ENCODE measurements at regions of chr2 and their contacts with region 1.

Region 1: DNA sequence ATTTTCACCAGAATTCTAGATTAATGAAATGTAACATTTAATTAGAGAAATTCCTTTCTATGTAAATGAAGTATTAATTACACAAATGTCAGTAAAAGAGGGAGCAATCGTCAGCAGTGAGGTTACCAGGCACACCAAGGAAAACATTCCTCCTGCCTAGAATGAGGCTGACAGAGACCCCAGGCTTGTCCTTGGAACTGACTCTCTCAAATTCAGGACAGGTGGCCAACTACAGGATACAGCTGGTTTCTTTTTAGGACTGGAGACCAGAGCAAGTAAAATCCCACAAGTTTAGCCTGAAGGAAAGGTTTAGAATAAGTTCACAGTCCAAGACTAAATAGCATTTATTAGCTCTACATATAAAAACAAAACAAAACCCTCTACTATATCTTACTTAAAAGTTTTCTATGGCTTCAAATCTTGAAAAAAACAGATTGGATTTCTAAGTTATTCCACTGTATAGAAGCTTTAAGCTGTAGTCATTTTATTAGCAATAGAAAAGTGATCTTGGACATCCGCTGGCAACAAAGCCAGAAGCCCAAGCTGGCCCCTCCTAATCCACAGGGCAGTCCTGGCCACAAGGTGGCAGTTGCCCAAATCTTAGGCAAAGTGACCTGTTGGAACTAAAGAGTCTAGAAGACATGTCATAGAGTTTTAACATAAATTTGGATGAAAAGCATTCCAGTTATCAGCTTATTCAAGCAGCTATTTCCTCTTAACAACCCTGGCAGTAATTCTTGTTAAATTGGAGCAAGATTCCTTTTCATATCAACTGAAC is 81.0 kb downstream of the SP3 start:
- DNase-seq: peak; percentile 55
- H3K4me3 ChIP-seq: no peak overlapping the region
- H3K27ac ChIP-seq: no peak overlapping the region
- H3K4me1 ChIP-seq: no peaks in the 10 kb centered on the region
- H3K27me3 ChIP-seq: peaks cover 14% of the 10 kb centered on the region
- CTCF ChIP-seq: peak; percentile 82

Region 2: GRCh38 chr2:174039551-174040416 is 155.6 kb after region 1 on chr2:
- intact Hi-C with region 1: loop called (anchors 10 kb)
- DNase-seq: peak; percentile 89
- H3K4me3 ChIP-seq: peak overlapping the region; percentile 31
- H3K27ac ChIP-seq: peak overlapping the region; percentile 94
- H3K4me1 ChIP-seq: peaks cover 47% of the 10 kb centered on the region
- H3K27me3 ChIP-seq: no peaks in the 10 kb centered on the region
- CTCF ChIP-seq: peak; percentile 90